ENCODE measurements at regions of chr5 and their contacts with region 1.

Region 1: DNA sequence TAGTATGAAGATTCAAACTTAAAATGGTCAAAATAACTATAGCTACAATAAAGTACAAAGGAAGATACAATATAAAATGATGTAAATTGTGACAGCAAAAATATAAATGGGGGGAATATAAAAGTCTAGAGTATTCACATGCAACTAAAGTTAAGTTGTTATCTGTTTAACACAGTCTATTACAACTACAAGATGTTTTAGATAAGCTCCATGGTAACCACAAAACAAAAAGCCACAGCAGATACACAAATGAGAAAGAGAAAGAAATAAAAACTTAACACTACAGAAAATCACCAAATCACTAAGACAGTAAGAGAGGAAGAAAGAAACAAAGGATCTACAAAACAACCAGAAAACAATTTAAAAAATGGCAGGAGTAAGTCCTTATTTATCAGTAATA is 17.0 kb upstream of the SH3TC2 start:
- DNase-seq: no peak
- H3K4me3 ChIP-seq: no peak overlapping the region
- H3K27ac ChIP-seq: no peak overlapping the region
- H3K4me1 ChIP-seq: no peaks in the 10 kb centered on the region
- H3K27me3 ChIP-seq: no peaks in the 10 kb centered on the region
- CTCF ChIP-seq: no peak
- EP300 ChIP-seq: no peak
- POLR2A ChIP-seq: no peak

Region 2: DNA sequence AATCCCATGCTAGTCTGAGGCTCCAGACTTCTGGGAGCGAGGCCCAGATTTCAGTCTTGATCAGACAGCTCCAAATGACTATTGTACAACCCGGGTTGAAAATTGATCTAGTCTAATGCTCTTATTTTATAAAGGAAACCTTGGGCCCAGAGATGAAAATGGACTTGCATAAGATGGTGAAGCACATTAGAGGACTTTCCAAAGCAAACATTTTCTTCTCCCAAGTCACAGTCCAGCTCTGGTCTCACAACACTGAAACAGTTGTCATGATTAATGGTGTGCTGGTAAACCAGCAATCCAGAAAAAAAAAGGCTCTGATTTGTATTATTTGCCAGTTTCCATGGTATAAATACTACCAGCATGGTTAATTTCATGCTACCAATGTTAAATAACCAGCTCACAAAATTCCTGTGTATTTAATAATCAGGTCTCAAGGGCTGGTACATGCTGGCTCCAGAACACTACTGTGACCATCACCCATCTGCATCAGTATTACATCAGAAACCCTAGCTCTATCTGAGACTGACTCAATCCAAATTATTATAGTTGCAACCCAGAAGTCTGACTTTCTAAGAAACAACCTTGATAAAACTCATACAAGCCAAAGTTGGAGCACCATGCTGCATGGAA is 28.9 kb after region 1 on chr5:
- intact Hi-C with region 1: loop called (anchors 2 kb)
- DNase-seq: no peak
- H3K4me3 ChIP-seq: no peak overlapping the region
- H3K27ac ChIP-seq: no peak overlapping the region
- H3K4me1 ChIP-seq: no peaks in the 10 kb centered on the region
- H3K27me3 ChIP-seq: no peaks in the 10 kb centered on the region
- CTCF ChIP-seq: no peak
- EP300 ChIP-seq: no peak
- POLR2A ChIP-seq: no peak

Region 3: GRCh38 chr5:149271716-149272563 is 192.1 kb after region 1 on chr5 and contains the start of gene AFAP1L1:
- intact Hi-C with region 1: no loop called
- DNase-seq: no peak
- H3K4me3 ChIP-seq: peak within 1 kb of the TSS; percentile 69 to 87 (median 78)
- H3K27ac ChIP-seq: peak within 1 kb of the TSS; percentile 76 to 85 (median 80)
- H3K4me1 ChIP-seq: peaks cover 15 to 21% (median 20%) of the 10 kb centered on the region in 4 donors
- H3K27me3 ChIP-seq: no peaks in the 10 kb centered on the region
- CTCF ChIP-seq: no peak
- EP300 ChIP-seq: no peak
- POLR2A ChIP-seq: no peak
- total RNA-seq, gene AFAP1L1: 10.0 to 23.8 (median 16.6) TPM